ENCODE measurements at regions of chr3 and their contacts with region 1.

Region 1: GRCh38 chr3:179322286-179323196 is at the start of gene ZNF639:
- DNase-seq: peak; percentile 88
- H3K4me3 ChIP-seq: peak within 1 kb of the TSS; percentile 59 to 91
- H3K27ac ChIP-seq: peak within 1 kb of the TSS; percentile 95 to 96
- H3K4me1 ChIP-seq: peaks cover 7% of the 10 kb centered on the region
- H3K27me3 ChIP-seq: no peaks in the 10 kb centered on the region
- CTCF ChIP-seq: peak; percentile 84 to 85 (median 85)
- POLR2A ChIP-seq: no peak
- total RNA-seq, gene ZNF639: 36.7 to 37.6 TPM

Region 2: DNA sequence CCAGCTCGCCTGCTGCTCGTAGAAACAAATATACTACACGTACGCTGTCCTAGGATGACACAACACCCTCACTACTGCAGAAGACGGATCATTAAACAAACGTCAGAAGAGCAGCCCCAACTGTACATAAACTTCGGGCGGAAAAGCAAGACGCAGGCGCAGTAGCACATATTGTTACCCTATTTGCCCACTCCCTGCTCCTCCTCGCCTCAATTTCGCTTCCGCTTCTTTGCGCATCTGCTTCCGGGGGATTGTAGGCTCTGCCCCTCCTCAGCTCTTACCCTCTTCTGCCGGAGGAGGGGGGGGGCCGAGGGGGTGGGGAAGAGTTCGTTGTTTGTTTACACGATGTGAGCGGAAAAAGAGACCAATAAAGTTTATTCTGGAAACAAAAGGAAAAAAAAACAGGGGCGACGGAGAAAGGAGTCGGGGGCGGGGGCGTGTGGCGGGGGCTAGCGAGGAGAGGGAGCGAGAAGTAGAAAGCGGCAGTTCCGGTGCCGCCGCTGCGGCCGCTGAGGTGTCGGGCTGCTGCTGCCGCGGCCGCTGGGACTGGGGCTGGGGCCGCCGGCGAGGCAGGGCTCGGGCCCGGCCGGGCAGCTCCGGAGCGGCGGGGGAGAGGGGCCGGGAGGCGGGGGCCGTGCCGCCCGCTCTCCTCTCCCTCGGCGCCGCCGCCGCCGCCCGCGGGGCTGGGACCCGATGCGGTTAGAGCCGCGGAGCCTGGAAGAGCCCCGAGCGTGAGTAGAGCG is 174.5 kb before region 1 on chr3 and contains the start of gene PIK3CA:
- intact Hi-C with region 1: loop called (anchors 5 kb)
- DNase-seq: peak; percentile 98
- H3K4me3 ChIP-seq: peak within 1 kb of the TSS; percentile 94 to 97
- H3K27ac ChIP-seq: peak within 1 kb of the TSS; percentile 97 to 99
- H3K4me1 ChIP-seq: peaks cover 9% of the 10 kb centered on the region
- H3K27me3 ChIP-seq: no peaks in the 10 kb centered on the region
- CTCF ChIP-seq: no peak
- POLR2A ChIP-seq: peak; percentile 30
- total RNA-seq, gene PIK3CA: 20.8 to 27.1 TPM

Region 3: DNA sequence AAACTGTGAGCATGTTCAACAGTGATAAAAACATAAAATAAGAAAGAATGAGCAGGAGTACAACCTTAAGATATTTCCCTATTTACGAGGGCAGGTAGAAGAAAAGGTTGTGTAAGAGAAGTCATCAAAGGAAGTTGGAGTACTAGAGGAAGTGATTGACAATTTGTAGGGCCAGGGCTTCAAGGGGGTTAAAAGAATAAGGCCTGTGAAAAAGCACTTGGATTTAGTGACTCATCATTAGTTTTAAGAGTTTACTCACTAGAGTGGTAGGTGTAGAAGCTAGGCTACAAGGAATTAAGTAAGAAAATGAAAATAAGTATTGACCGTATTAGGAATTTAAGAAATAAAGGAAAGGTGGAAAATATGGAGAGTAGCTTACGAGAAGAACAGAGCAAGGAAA is 95.2 kb before region 1 on chr3:
- intact Hi-C with region 1: no loop called
- DNase-seq: no peak
- H3K4me3 ChIP-seq: no peak overlapping the region
- H3K27ac ChIP-seq: no peak overlapping the region
- H3K4me1 ChIP-seq: no peaks in the 10 kb centered on the region
- H3K27me3 ChIP-seq: no peaks in the 10 kb centered on the region
- CTCF ChIP-seq: no peak
- POLR2A ChIP-seq: no peak

Measured in testis (tissue), 5 donors.